SK-MEL-5 (cell line): ENCODE measurements at regions of chr12 and their contacts with region 1.

Region 1: DNA sequence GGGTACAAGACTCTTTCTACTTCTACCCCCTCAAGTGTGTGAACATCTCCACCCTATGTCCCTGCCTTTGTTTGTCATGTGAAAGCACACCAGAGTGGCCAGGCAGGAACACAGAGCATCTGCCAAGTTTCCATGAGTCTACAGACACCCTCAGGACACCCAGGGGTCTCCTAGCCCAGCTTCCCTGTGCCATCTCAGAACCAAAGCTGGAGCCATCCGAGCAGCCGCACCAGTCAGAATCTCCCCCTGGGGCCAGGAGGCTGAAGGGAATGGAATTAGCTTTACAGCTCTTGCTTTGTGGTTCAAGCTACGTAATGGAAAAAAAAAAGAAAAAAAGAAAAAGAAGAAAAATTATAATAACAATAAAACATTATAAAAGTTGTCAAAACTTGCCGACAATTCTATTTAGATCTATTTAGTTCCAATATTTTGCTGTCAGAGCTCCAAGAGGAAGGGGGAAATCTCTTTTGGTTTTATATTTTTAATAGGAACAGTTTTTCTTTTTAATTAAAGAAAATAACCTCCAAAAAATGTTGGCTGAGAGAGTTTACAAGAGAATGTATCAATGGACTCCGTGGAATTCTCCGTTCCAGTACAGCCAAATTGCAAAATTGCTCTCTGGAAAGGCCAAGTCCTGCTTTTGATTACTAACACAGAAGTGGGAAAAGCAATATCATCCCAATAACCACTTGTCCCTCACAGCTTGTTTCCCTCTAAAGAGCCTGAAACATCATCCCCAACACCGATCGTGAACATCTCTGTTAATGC is 37.1 kb downstream of the TBX5 start:
- DNase-seq: no peak

Region 2: DNA sequence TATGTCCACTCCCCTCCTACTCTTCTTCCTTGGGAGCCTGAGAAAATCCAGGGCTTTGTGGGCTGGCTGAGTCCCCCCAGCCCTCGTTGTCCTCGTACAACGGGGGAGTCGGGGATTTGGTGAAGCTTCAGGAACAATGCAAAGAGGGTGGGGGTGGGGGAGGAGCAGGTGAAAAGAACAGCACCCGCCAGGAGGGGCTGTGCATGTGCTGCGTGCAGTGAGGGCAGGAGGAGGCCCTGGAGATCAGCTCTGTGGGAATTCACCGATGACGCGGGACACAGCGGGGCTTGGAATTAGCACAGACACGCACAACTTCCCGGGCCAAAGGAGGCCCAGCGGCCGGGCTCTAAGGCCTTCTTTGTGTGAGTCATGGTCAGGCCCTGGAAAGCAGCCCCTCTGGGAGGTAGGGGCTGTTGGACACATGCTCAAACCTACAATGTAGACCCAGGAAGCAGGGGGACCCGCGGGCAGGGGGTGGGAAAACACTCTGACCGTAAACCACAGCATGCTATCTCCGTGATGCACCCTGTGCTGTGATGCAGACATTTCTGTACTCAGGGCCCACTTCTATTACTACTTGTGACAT is 435.6 kb before region 1 on chr12:
- in situ Hi-C with region 1: no loop called
- DNase-seq: peak; percentile 91

Region 3: DNA sequence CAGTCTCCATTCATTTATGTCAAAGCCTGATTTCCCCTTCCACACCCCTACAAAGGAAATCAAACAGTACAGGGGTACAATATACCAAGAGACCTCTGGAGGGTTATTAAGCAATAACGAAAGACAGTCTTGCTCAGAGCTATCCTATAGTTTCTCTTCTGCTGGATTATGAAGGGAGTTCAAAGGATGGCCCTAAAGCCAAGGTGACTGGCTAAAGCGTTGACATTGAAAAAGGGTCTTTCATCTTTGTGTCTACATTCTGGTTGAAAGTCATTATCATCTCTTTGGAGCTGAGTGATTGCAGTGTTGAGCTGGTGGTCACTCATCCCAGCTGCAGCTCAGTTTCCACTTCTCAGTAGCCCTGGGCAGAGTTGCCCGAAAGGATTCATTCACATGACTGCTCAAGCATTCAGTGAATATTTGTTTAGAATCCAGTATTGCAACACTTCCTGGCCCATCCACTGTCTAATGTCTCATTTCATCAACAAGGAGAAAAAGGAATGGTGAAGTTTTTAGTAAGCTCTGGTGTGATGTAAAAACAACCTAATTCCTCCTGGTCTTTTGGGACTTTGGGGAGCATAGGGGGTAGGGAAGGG is 56.3 kb after region 1 on chr12:
- in situ Hi-C with region 1: loop called (anchors 10 kb)
- DNase-seq: peak; percentile 92